ENCODE measurements at regions of chr2 and their contacts with region 1.

Region 1: DNA sequence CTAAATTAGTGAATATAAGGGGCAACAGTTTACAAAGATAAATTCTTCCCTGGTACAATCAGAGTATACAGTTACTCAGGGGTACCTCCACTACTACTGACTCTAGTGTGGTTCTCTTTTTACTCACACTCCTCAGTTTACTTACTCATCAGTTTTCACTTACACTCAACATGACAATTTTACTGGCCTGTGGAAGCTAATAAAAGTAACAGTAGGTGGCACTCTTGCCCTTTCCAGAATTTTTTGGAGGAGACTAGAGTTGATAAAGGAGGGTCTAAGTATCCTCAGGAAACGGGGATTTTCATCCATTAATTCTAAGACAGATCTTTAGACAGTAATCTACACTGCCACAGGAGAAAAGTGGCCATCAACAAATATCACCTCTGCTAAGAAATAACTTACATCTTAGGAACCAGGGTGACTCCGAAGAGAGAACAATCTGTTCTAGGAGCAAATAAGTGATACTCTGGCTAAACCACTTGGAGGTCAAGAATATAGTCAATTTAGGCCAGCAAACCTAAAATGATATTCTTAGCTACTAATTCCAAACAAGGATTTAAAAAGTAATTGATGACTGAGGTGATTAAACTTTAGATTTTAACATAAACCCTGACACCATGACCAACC is 61.3 kb downstream of the ATL2 start:
- DNase-seq: no peak
- H3K4me3 ChIP-seq: no peak overlapping the region
- H3K27ac ChIP-seq: peak overlapping the region in 2 of 3 donors; percentile 64 to 79
- H3K4me1 ChIP-seq: peaks cover 27 to 33% of the 10 kb centered on the region in 2 donors
- H3K27me3 ChIP-seq: no peaks in the 10 kb centered on the region
- CTCF ChIP-seq: peak; percentile 41 to 87 (median 76)
- POLR2A ChIP-seq: no peak

Region 2: GRCh38 chr2:38508311-38509039 is 192.7 kb after region 1 on chr2:
- intact Hi-C with region 1: loop called (anchors 10 kb)
- DNase-seq: peak; percentile 93 to 95
- H3K4me3 ChIP-seq: no peak overlapping the region
- H3K27ac ChIP-seq: peak overlapping the region; percentile 46 to 74 (median 67)
- H3K4me1 ChIP-seq: peaks cover 16 to 29% of the 10 kb centered on the region in 2 donors
- H3K27me3 ChIP-seq: no peaks in the 10 kb centered on the region
- CTCF ChIP-seq: peak in 4 of 6 experiments; percentile 17 to 44 (median 33)
- POLR2A ChIP-seq: no peak

Measured in thyroid gland (tissue), 4 donors.